ENCODE measurements at regions of chr1 and their contacts with region 1.

Region 1: DNA sequence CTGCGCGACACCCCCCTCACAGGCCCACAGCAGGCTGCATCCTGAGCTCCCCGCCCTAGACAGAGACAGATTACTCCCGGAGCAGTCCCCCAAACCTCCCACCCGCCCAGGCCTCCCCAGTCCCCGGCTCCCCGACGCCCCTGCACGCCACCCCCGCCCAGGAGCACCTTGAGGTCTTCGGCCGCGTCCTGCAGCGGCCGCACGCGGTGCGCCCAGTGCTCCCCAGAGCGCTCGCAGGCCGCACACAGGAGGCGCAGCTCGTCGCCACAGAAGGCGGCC is 709 bp downstream of the TRIM11 start:
- DNase-seq: no peak
- ATAC-seq: no peak

Region 2: GRCh38 chr1:228378873-228379460 is 27.0 kb before region 1 on chr1:
- intact Hi-C with region 1: no loop called
- DNase-seq: peak; percentile 72
- ATAC-seq: no peak

Region 3: DNA sequence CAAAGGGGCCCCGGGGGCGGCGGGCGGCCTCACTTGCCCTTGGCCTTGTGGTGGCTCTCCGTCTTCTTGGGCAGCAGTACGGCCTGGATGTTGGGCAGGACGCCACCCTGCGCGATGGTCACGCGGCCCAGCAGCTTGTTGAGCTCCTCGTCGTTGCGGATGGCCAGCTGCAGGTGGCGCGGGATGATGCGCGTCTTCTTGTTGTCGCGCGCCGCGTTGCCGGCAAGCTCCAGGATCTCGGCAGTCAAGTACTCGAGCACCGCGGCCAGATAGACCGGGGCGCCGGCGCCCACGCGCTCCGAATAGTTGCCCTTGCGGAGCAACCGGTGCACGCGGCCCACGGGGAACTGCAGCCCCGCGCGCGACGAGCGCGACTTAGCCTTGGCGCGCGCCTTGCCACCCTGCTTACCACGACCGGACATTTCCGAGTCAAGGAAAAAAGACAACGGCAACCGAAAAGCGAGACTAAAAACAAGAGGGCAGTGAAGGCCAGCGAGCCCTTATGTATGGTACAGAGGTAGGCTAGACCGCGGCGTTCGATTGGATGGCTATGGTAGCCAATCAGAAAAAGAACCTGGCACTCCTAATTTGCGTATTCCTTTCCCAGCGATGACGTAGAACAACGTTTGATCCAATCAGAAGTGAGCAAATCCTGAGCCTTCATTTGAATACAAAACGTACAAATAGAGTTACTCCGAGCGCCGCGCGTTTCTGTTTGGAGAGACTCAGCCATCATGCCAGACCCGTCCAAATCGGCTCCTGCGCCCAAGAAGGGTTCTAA is 51.7 kb after region 1 on chr1:
- intact Hi-C with region 1: loop called (anchors 5 kb)
- DNase-seq: peak; percentile 90
- ATAC-seq: peak; percentile 97